Naive thymus-derived CD4-positive, alpha-beta T cell (primary cell): ENCODE measurements at regions of chr11 and their contacts with region 1.

Region 1: GRCh38 chr11:95923728-95924413 is at the start of gene MTMR2:
- DNase-seq: peak in 8 of 9 donors; percentile 16 to 70 (median 26)
- ATAC-seq: peak; percentile 87
- H3K4me3 ChIP-seq: peak within 1 kb of the TSS; percentile 91
- H3K4me3 Mint-ChIP-seq: peak within 1 kb of the TSS; percentile 85 to 98 (median 94)
- H3K27ac ChIP-seq: peak within 1 kb of the TSS; percentile 65
- H3K27ac Mint-ChIP-seq: peak within 1 kb of the TSS; percentile 80 to 96 (median 90)
- H3K4me1 ChIP-seq: peaks cover 0 to 12% of the 10 kb centered on the region in 2 donors
- H3K4me1 Mint-ChIP-seq: peaks cover 18 to 37% (median 25%) of the 10 kb centered on the region in 7 donors
- H3K27me3 ChIP-seq: no peaks in the 10 kb centered on the region
- H3K27me3 Mint-ChIP-seq: peaks cover 5 to 11% (median 8%) of the 10 kb centered on the region in 5 donors
- total RNA-seq, gene MTMR2: 9.0 to 20.8 (median 10.5) TPM

Region 2: DNA sequence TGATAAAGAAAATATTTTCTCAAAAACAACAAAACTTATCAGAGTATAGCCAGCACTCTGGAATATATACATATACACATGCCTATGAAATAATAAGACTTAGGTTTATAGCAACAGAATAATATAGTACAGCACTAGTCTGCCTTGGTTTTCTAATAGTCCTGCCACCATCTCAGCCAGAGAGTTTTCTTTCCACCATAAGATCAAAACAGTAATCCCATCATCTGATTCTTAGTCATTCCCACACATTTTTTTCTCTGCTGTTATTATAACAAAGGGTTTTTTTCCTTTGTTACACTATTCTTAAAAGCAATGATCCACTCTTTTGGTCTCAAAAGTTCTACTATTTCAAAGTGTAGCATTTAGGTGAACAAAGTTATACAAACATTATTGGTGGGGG is 15.0 kb before region 1 on chr11:
- CTCF ChIA-PET with region 1: no interaction called
- POLR2A ChIA-PET with region 1: no interaction called
- intact Hi-C with region 1: loop called in 1 of 2 experiments (anchors 2 kb)
- DNase-seq: no peak
- ATAC-seq: no peak
- H3K4me3 ChIP-seq: no peak overlapping the region
- H3K4me3 Mint-ChIP-seq: no peak overlapping the region
- H3K27ac ChIP-seq: no peak overlapping the region
- H3K27ac Mint-ChIP-seq: peak overlapping the region in 1 of 9 donors; percentile 9
- H3K4me1 ChIP-seq: no peaks in the 10 kb centered on the region
- H3K4me1 Mint-ChIP-seq: peaks cover 2 to 17% (median 12%) of the 10 kb centered on the region in 7 donors
- H3K27me3 ChIP-seq: no peaks in the 10 kb centered on the region
- H3K27me3 Mint-ChIP-seq: no peaks in the 10 kb centered on the region